Aorta (tissue), 5 donors: ENCODE measurements at regions of chr14 and their contacts with region 1.

Region 1: GRCh38 chr14:51014086-51014485 is 69.8 kb upstream of the PYGL start:
- DNase-seq: peak in 1 of 2 donors; percentile 59
- ATAC-seq: peak; percentile 88
- H3K4me3 ChIP-seq: no peak overlapping the region
- H3K27ac ChIP-seq: no peak overlapping the region
- H3K4me1 ChIP-seq: peaks cover 1 to 3% of the 10 kb centered on the region in 2 donors
- H3K27me3 ChIP-seq: no peaks in the 10 kb centered on the region

Region 2: GRCh38 chr14:50835280-50835679 is 178.8 kb before region 1 on chr14:
- intact Hi-C with region 1: no loop called
- DNase-seq: no peak
- ATAC-seq: no peak
- H3K4me3 ChIP-seq: no peak overlapping the region
- H3K27ac ChIP-seq: no peak overlapping the region
- H3K4me1 ChIP-seq: no peaks in the 10 kb centered on the region
- H3K27me3 ChIP-seq: no peaks in the 10 kb centered on the region

Region 3: DNA sequence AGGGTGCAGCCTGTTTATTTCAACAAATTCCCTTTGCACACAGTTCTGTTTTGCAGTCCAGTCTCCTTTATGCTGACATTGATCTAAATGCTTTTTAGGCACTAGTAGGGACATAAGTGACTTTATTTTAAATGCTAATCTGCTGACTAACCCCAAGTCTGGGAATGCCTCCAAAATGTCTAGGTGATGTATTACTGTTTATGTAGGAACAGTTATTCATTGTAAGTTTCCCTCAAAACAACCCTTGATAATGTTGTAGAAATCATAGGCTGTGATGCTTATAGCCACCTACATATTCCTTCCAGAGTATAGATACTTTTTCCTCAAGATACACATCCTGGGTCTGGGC is 52.2 kb before region 1 on chr14:
- intact Hi-C with region 1: loop called in 1 of 2 experiments (anchors 2 kb)
- DNase-seq: no peak
- ATAC-seq: peak; percentile 79
- H3K4me3 ChIP-seq: no peak overlapping the region
- H3K27ac ChIP-seq: peak overlapping the region in 1 of 2 donors; percentile 48
- H3K4me1 ChIP-seq: no peaks in the 10 kb centered on the region
- H3K27me3 ChIP-seq: no peaks in the 10 kb centered on the region

Region 4: DNA sequence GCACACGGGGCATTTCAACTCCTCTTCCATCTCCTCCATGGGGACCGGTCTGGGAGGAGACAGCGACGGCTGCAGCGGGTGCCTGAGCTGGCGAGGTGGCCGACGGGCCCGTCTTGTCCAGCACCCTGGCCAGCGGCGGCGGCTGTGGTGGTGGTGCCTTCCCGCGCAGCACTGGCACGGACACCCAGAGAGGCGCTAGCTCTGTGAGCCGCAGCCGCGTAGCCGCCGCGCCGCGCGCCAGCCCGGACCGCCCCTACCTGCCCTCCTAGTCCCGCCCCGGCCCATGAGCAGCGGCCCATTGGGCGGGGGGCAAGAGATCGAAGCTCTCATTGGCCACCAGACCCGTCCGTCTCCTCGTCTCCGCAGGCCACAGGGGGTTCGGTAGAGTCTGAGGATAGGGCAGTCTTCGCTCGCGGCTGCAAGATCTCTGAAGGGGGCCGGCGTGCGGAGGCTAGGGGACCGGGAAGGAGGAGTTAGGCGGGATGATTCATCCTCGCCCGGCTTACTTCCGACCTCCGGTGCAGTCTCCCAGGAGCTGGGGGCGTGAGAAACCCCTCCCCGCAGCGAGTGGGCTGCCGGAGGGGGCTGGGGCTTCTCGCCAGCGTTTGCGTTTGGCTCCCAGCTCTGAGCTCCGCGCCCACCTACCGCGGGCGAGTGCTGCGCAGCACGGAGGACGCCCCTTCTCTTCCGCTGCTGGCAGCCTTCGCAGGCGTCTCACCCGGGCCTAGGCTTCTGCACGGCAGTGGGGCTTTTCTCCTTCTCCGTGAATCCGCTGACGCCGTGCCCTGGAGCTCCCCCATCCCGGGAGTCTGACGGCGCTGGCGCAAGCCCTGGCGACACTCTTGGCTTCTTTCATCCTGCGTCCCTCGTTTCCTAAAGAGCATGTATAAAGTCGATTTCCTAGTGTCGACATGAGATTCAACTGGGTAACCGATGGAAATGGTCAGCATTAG is 81.1 kb after region 1 on chr14 and contains the start of gene TRIM9:
- intact Hi-C with region 1: loop called in 1 of 2 experiments (anchors 5 kb)
- DNase-seq: peak; percentile 94 to 95
- ATAC-seq: peak; percentile 91
- H3K4me3 ChIP-seq: peak within 1 kb of the TSS; percentile 36 to 65
- H3K27ac ChIP-seq: no peak within 1 kb of the TSS
- H3K4me1 ChIP-seq: no peaks in the 10 kb centered on the region
- H3K27me3 ChIP-seq: no peaks in the 10 kb centered on the region
- total RNA-seq, gene TRIM9: 1.3 to 7.9 TPM

Region 5: DNA sequence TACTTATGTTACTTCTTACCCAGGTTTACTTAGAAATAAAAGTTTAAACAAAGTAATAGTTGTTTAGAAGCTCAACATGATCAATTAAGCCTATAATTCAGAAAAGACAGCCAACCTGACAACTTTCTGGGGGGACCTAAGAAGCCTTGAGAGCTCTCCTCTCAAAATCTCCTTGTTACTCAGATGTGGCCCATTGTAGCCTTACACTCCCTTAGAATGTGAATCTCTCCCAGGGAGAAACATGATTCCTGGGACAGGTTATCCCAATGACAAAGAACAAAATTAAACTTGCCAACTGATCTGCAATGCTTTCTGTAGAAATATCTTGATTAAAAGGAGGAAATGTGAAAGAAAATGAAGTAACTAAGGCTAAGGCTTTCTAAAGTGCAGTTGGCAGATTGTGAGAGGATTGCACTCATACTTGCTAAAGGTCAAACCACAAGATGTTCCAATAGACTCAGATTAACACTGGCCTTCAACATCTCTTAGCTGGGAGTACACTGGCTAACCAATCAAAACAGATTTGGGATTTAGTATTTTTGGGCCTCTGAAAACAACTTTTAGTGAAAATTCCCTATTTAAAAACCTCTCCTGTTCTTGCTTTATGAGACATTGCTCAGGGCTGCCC is 153.6 kb after region 1 on chr14:
- intact Hi-C with region 1: no loop called
- DNase-seq: no peak
- ATAC-seq: peak; percentile 89
- H3K4me3 ChIP-seq: no peak overlapping the region
- H3K27ac ChIP-seq: no peak overlapping the region
- H3K4me1 ChIP-seq: no peaks in the 10 kb centered on the region
- H3K27me3 ChIP-seq: no peaks in the 10 kb centered on the region